Sigmoid colon (tissue), 7 donors: ENCODE measurements at regions of chr21 and their contacts with region 1.

Region 1: GRCh38 chr21:39105341-39105765 is 77.9 kb downstream of the PSMG1 start:
- DNase-seq: no peak
- H3K4me3 ChIP-seq: no peak overlapping the region
- H3K27ac ChIP-seq: peak overlapping the region in 2 of 4 donors; percentile 25 to 48
- H3K4me1 ChIP-seq: peaks cover 0 to 16% (median 8%) of the 10 kb centered on the region in 4 donors
- H3K27me3 ChIP-seq: no peaks in the 10 kb centered on the region
- CTCF ChIP-seq: no peak
- EP300 ChIP-seq: no peak
- POLR2A ChIP-seq: no peak

Region 2: GRCh38 chr21:39004634-39005501 is 100.5 kb before region 1 on chr21:
- intact Hi-C with region 1: loop called (anchors 10 kb)
- DNase-seq: peak; percentile 87
- H3K4me3 ChIP-seq: no peak overlapping the region
- H3K27ac ChIP-seq: peak overlapping the region; percentile 57 to 68 (median 67)
- H3K4me1 ChIP-seq: peaks cover 0 to 18% (median 15%) of the 10 kb centered on the region in 4 donors
- H3K27me3 ChIP-seq: no peaks in the 10 kb centered on the region
- CTCF ChIP-seq: no peak
- EP300 ChIP-seq: no peak
- POLR2A ChIP-seq: no peak

Region 3: GRCh38 chr21:39852021-39852721 is 746.8 kb after region 1 on chr21:
- intact Hi-C with region 1: no loop called
- DNase-seq: no peak
- H3K4me3 ChIP-seq: no peak overlapping the region
- H3K27ac ChIP-seq: no peak overlapping the region
- H3K4me1 ChIP-seq: peaks cover 0 to 8% (median 4%) of the 10 kb centered on the region in 4 donors
- H3K27me3 ChIP-seq: no peaks in the 10 kb centered on the region
- CTCF ChIP-seq: no peak
- EP300 ChIP-seq: no peak
- POLR2A ChIP-seq: no peak